ENCODE measurements at regions of chr18 and their contacts with region 1.

Region 1: GRCh38 chr18:62399781-62400308 is 74.7 kb downstream of the TNFRSF11A start:
- DNase-seq: no peak
- H3K4me3 ChIP-seq: no peak overlapping the region
- H3K27ac ChIP-seq: no peak overlapping the region
- H3K4me1 ChIP-seq: peaks cover 3 to 6% (median 4%) of the 10 kb centered on the region in 4 experiments; a peak in 4 of 7 replicates
- H3K27me3 ChIP-seq: no peaks in the 10 kb centered on the region
- CTCF ChIP-seq: peak; percentile 43 to 67 (median 55)
- EP300 ChIP-seq: no peak
- POLR2A ChIP-seq: no peak
- RAD21 ChIP-seq: peak; percentile 41 to 57; a peak in 3 of 4 replicates

Region 2: GRCh38 chr18:62388855-62389760 is 10.7 kb before region 1 on chr18:
- CTCF ChIA-PET with region 1: interaction called, 36 read pairs
- POLR2A ChIA-PET with region 1: interaction called, 4 read pairs
- DNase-seq: no peak
- H3K4me3 ChIP-seq: no peak overlapping the region
- H3K27ac ChIP-seq: no peak overlapping the region
- H3K4me1 ChIP-seq: peaks cover 0 to 10% (median 5%) of the 10 kb centered on the region in 4 experiments; a peak in 5 of 7 replicates
- H3K27me3 ChIP-seq: 0 out of 7 replicates have a peak, but pooled peaks cover 0 to under 1% (median 0%) of the 10 kb centered on the region in 4 experiments
- CTCF ChIP-seq: no peak
- EP300 ChIP-seq: no peak
- POLR2A ChIP-seq: no peak
- RAD21 ChIP-seq: no peak

Region 3: GRCh38 chr18:62413206-62413605 is 13.4 kb after region 1 on chr18:
- CTCF ChIA-PET with region 1: interaction called, 12 read pairs
- POLR2A ChIA-PET with region 1: no interaction called
- DNase-seq: no peak
- H3K4me3 ChIP-seq: no peak overlapping the region
- H3K27ac ChIP-seq: no peak overlapping the region
- H3K4me1 ChIP-seq: no peaks in the 10 kb centered on the region
- H3K27me3 ChIP-seq: no peaks in the 10 kb centered on the region
- CTCF ChIP-seq: no peak
- EP300 ChIP-seq: no peak
- POLR2A ChIP-seq: no peak
- RAD21 ChIP-seq: no peak

Measured in H1 (cell line).